Left colon (tissue), 2 donors: ENCODE measurements at regions of chr12 and their contacts with region 1.

Region 1: GRCh38 chr12:103771466-103771865 is 69.6 kb downstream of the NT5DC3 start:
- DNase-seq: peak in 1 of 2 donors; percentile 18
- ATAC-seq: peak; percentile 44

Region 2: DNA sequence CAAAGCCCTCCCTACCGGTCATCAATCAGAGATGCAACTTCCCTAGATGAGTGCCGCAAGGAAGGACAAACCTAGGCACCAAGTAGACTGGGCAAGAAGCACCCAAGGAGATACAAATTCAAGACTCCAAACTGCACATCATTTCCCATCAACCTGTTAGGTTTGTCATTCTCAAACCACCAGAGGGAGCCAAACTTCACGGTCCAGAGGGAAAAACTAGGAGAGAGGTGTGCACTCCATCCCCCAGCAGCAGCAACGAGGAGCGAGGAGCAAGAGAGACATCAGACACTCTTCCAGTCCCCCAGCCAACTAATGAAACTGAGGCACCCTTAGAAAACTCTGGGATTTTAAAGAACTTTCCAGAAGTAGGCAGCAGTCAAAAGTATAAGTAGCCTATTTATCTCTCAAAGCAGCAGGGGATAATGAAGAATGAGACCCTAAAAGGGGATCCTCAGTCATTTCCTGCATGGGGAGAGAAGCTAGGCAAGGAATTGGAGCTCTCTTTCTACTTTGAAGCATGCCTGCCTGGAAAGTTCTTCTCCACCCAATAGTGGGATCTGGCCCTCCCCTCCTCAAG is 106.6 kb after region 1 on chr12:
- intact Hi-C with region 1: loop called in 1 of 2 experiments (anchors 10 kb)
- DNase-seq: peak; percentile 46 to 50
- ATAC-seq: peak; percentile 84